Activated CD4-positive, alpha-beta T cell treated with anti-CD3 and anti-CD28 coated beads, Interleukin-2, amount 10 ng/mL, durations not matched to agents 24 days and 14 days (primary cell): ENCODE measurements at regions of chr12 and their contacts with region 1.

Region 1: GRCh38 chr12:75933101-75933500 is 98.5 kb downstream of the PHLDA1 start:
- DNase-seq: no peak
- H3K4me3 Mint-ChIP-seq: no peak overlapping the region
- H3K27ac Mint-ChIP-seq: no peak overlapping the region
- H3K4me1 Mint-ChIP-seq: peaks cover 45% of the 10 kb centered on the region
- H3K27me3 Mint-ChIP-seq: no peaks in the 10 kb centered on the region

Region 2: GRCh38 chr12:75790219-75790618 is 142.9 kb before region 1 on chr12:
- intact Hi-C with region 1: no loop called
- DNase-seq: no peak
- H3K4me3 Mint-ChIP-seq: no peak overlapping the region
- H3K27ac Mint-ChIP-seq: no peak overlapping the region
- H3K4me1 Mint-ChIP-seq: peaks cover 3% of the 10 kb centered on the region
- H3K27me3 Mint-ChIP-seq: peaks cover 16% of the 10 kb centered on the region

Region 3: GRCh38 chr12:75877763-75878621 is 55.1 kb before region 1 on chr12:
- intact Hi-C with region 1: loop called (anchors 1 kb)
- DNase-seq: no peak
- H3K4me3 Mint-ChIP-seq: no peak overlapping the region
- H3K27ac Mint-ChIP-seq: no peak overlapping the region
- H3K4me1 Mint-ChIP-seq: peaks cover 24% of the 10 kb centered on the region
- H3K27me3 Mint-ChIP-seq: peaks cover 44% of the 10 kb centered on the region

Region 4: GRCh38 chr12:75913502-75914351 is 19.4 kb before region 1 on chr12:
- intact Hi-C with region 1: loop called (anchors 1 kb)
- DNase-seq: peak; percentile 63
- H3K4me3 Mint-ChIP-seq: no peak overlapping the region
- H3K27ac Mint-ChIP-seq: peak overlapping the region; percentile 65
- H3K4me1 Mint-ChIP-seq: peaks cover 25% of the 10 kb centered on the region
- H3K27me3 Mint-ChIP-seq: peaks cover 3% of the 10 kb centered on the region

Region 5: GRCh38 chr12:75994186-75994731 is 61.2 kb after region 1 on chr12:
- intact Hi-C with region 1: loop called (anchors 1 kb)
- DNase-seq: peak; percentile 71
- H3K4me3 Mint-ChIP-seq: peak overlapping the region; percentile 4
- H3K27ac Mint-ChIP-seq: peak overlapping the region; percentile 90
- H3K4me1 Mint-ChIP-seq: peaks cover 24% of the 10 kb centered on the region
- H3K27me3 Mint-ChIP-seq: no peaks in the 10 kb centered on the region